Activated naive CD4-positive, alpha-beta T cell treated with anti-CD3 and anti-CD28 coated beads for 36 hours (primary cell): ENCODE measurements at regions of chr20 and their contacts with region 1.

Region 1: GRCh38 chr20:17995967-17996819 is 27.4 kb downstream of the MGME1 start:
- DNase-seq: peak; percentile 59
- H3K4me3 Mint-ChIP-seq: no peak overlapping the region
- H3K27ac Mint-ChIP-seq: no peak overlapping the region
- H3K4me1 Mint-ChIP-seq: peaks cover 21% of the 10 kb centered on the region
- H3K27me3 Mint-ChIP-seq: peaks cover 12% of the 10 kb centered on the region

Region 2: GRCh38 chr20:17536944-17537444 is 459.2 kb before region 1 on chr20:
- CTCF ChIA-PET with region 1: no interaction called
- intact Hi-C with region 1: loop called (anchors 1 kb)
- DNase-seq: peak; percentile 78
- H3K4me3 Mint-ChIP-seq: no peak overlapping the region
- H3K27ac Mint-ChIP-seq: no peak overlapping the region
- H3K4me1 Mint-ChIP-seq: no peaks in the 10 kb centered on the region
- H3K27me3 Mint-ChIP-seq: peaks cover 2% of the 10 kb centered on the region

Region 3: DNA sequence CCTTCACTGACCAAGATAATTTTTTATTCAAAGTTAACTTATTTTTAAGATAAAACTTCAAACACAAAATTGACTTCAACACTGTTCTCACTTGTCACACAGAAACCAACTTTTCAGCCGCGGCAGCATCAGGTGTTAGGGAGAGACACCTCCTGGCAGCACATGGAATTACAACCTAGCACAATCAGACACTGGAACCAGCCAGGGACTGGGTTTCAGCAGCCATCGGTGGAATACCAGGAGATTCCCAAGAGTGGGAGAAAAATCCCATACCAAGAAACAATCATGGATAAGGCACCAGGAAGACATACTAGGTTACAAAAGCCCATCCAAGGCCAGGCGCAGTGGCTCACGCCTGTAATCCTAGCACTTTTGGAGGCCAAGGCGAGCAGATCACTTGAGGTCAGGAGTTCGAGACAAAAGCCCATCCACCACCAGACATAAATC is 97.6 kb before region 1 on chr20:
- CTCF ChIA-PET with region 1: no interaction called
- intact Hi-C with region 1: loop called (anchors 1 kb)
- DNase-seq: peak; percentile 78
- H3K4me3 Mint-ChIP-seq: no peak overlapping the region
- H3K27ac Mint-ChIP-seq: no peak overlapping the region
- H3K4me1 Mint-ChIP-seq: peaks cover 12% of the 10 kb centered on the region
- H3K27me3 Mint-ChIP-seq: peaks cover 25% of the 10 kb centered on the region

Region 4: GRCh38 chr20:17938871-17939619 is 57.1 kb before region 1 on chr20:
- CTCF ChIA-PET with region 1: interaction called, 7 read pairs
- intact Hi-C with region 1: loop called (anchors 1 kb)
- DNase-seq: peak; percentile 69
- H3K4me3 Mint-ChIP-seq: no peak overlapping the region
- H3K27ac Mint-ChIP-seq: no peak overlapping the region
- H3K4me1 Mint-ChIP-seq: peaks cover 12% of the 10 kb centered on the region
- H3K27me3 Mint-ChIP-seq: no peaks in the 10 kb centered on the region

Region 5: DNA sequence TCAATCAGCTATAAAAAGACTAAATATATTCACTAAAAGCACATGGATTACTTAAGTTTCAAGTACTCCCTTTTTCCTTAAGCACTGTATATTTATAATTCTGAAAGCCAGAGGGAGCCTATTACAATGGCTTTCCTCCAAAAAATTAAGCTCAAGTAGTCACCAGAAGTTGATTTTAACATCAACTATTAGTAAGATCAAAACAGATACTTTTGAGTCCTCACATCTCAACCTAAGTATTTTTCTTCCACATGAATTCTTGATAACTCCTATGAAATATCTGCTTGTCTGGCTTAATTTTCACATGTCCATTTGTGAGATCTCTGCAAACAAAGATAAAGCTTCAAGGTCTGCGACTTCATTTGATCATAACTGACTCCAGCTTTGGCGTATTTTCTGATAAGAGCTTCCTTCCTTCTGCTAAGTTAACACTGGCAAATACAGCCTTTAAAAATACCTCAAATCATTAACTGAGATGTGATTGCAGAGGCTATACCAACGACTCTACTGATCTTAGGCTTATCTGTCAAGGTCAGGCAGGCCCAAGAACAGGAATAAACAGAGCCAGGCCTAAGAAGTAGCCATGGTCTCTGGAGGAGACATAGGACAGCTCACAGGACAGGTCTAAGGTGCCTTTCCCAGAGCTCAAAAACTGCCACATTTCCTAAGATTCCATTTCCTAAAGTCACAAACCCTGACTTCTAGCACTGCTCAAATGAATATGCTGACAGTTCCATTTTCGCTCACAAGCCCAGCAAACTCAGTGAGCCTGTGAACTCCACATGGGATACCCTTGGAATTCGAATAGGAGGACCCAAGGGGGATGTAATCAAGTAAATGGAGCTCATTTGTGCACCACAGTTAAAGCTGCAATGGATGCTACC is 37.6 kb before region 1 on chr20:
- CTCF ChIA-PET with region 1: interaction called, 3 read pairs
- intact Hi-C with region 1: loop called (anchors 5 kb)
- DNase-seq: no peak
- H3K4me3 Mint-ChIP-seq: no peak overlapping the region
- H3K27ac Mint-ChIP-seq: peak overlapping the region; percentile 66
- H3K4me1 Mint-ChIP-seq: peaks cover 62% of the 10 kb centered on the region
- H3K27me3 Mint-ChIP-seq: no peaks in the 10 kb centered on the region

Region 6: DNA sequence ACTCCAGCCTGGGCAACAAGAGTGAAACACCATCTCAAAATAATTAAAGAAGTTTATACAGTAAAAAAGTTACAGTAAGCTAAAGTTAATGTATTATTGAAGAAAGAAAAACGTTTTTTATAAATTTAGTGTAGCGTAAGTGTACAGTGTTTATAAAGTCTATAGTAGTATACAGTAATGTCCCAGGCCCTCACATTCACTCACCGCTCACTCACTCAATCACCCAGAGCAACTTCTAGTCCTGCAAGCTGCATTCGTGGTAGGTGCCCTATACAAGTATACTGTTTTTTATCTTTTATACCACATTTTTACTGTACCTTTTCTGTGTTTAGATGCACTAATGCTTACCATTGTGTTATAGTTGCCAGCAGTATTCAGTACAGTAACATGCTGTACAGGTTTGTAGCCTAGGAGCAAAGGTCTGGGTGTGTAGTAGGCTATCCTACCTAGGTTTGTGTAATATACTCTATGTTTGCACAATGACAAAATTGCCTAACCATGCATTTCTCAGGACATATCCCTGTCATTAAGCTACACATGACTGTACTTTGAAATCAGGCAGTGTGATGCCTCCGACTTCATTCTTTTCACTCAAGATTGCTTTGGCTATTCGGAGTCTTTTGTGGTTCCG is 10.7 kb before region 1 on chr20:
- CTCF ChIA-PET with region 1: interaction called, 11 read pairs
- intact Hi-C with region 1: no loop called
- DNase-seq: no peak
- H3K4me3 Mint-ChIP-seq: no peak overlapping the region
- H3K27ac Mint-ChIP-seq: no peak overlapping the region
- H3K4me1 Mint-ChIP-seq: peaks cover 12% of the 10 kb centered on the region
- H3K27me3 Mint-ChIP-seq: no peaks in the 10 kb centered on the region

Region 7: GRCh38 chr20:18066421-18067336 is 70.5 kb after region 1 on chr20:
- CTCF ChIA-PET with region 1: no interaction called
- intact Hi-C with region 1: no loop called
- DNase-seq: no peak
- H3K4me3 Mint-ChIP-seq: no peak overlapping the region
- H3K27ac Mint-ChIP-seq: no peak overlapping the region
- H3K4me1 Mint-ChIP-seq: no peaks in the 10 kb centered on the region
- H3K27me3 Mint-ChIP-seq: peaks cover 12% of the 10 kb centered on the region

Region 8: GRCh38 chr20:18276821-18277220 is 280.6 kb after region 1 on chr20:
- CTCF ChIA-PET with region 1: interaction called, 4 read pairs
- intact Hi-C with region 1: loop called (anchors 2 kb)
- DNase-seq: peak; percentile 80
- H3K4me3 Mint-ChIP-seq: no peak overlapping the region
- H3K27ac Mint-ChIP-seq: no peak overlapping the region
- H3K4me1 Mint-ChIP-seq: no peaks in the 10 kb centered on the region
- H3K27me3 Mint-ChIP-seq: peaks cover 37% of the 10 kb centered on the region